ENCODE measurements at regions of chr14 and their contacts with region 1.

Region 1: GRCh38 chr14:33792720-33793368 is 158.0 kb downstream of the EGLN3 start:
- DNase-seq: peak; percentile 81
- ATAC-seq: peak; percentile 80
- H3K4me3 Mint-ChIP-seq: no peak overlapping the region
- H3K27ac Mint-ChIP-seq: no peak overlapping the region
- H3K4me1 Mint-ChIP-seq: peaks cover 17% of the 10 kb centered on the region
- H3K27me3 Mint-ChIP-seq: peaks cover 14% of the 10 kb centered on the region

Region 2: DNA sequence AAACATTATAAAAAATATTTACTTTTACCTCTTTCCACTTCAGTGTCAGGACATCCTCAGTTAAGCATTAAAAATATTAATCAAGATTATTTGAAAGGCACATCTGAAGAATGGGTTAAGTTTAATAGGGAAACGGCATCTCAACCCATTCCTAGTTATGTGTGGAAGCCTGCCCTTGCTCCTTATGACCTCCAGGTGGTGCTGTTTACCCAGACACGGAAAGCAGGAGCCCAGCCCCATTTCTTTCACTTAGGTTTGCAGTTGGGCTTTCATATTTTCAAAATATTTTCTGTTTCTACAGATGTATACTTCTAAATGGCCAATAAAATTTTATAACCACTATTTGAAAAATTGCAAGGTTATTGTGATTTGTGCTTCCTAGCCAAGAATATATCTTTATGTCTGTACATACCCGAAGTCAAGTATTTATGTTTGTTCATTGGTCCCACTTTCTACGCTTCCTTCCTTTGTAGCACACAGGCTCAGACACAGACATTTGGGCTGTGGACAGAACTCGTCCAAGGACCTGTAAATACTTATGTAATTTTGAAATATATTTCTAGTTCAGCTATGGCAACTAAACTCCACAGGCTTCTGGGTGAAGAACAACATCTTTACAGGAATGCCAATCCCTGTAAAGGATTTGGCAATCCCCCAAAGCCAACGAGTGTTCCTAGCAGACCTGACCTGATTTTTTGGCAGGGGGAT is 1216.6 kb before region 1 on chr14:
- CTCF ChIA-PET with region 1: interaction called, 14 read pairs
- POLR2A ChIA-PET with region 1: no interaction called
- DNase-seq: peak; percentile 55
- ATAC-seq: peak; percentile 74
- H3K4me3 Mint-ChIP-seq: no peak overlapping the region
- H3K27ac Mint-ChIP-seq: no peak overlapping the region
- H3K4me1 Mint-ChIP-seq: no peaks in the 10 kb centered on the region
- H3K27me3 Mint-ChIP-seq: peaks cover 12% of the 10 kb centered on the region

Region 3: GRCh38 chr14:32588448-32589320 is 1204.2 kb before region 1 on chr14:
- CTCF ChIA-PET with region 1: interaction called, 15 read pairs
- POLR2A ChIA-PET with region 1: no interaction called
- DNase-seq: peak; percentile 22
- ATAC-seq: no peak
- H3K4me3 Mint-ChIP-seq: no peak overlapping the region
- H3K27ac Mint-ChIP-seq: no peak overlapping the region
- H3K4me1 Mint-ChIP-seq: no peaks in the 10 kb centered on the region
- H3K27me3 Mint-ChIP-seq: peaks cover 1% of the 10 kb centered on the region

Region 4: GRCh38 chr14:33475623-33476022 is 317.2 kb before region 1 on chr14:
- CTCF ChIA-PET with region 1: interaction called, 11 read pairs
- POLR2A ChIA-PET with region 1: no interaction called
- DNase-seq: peak; percentile 22
- ATAC-seq: no peak
- H3K4me3 Mint-ChIP-seq: no peak overlapping the region
- H3K27ac Mint-ChIP-seq: no peak overlapping the region
- H3K4me1 Mint-ChIP-seq: no peaks in the 10 kb centered on the region
- H3K27me3 Mint-ChIP-seq: peaks cover 4% of the 10 kb centered on the region

Region 5: GRCh38 chr14:33805593-33805992 is 12.7 kb after region 1 on chr14:
- CTCF ChIA-PET with region 1: interaction called, 24 read pairs
- POLR2A ChIA-PET with region 1: no interaction called
- DNase-seq: no peak
- ATAC-seq: no peak
- H3K4me3 Mint-ChIP-seq: no peak overlapping the region
- H3K27ac Mint-ChIP-seq: no peak overlapping the region
- H3K4me1 Mint-ChIP-seq: no peaks in the 10 kb centered on the region
- H3K27me3 Mint-ChIP-seq: peaks cover 21% of the 10 kb centered on the region

Region 6: DNA sequence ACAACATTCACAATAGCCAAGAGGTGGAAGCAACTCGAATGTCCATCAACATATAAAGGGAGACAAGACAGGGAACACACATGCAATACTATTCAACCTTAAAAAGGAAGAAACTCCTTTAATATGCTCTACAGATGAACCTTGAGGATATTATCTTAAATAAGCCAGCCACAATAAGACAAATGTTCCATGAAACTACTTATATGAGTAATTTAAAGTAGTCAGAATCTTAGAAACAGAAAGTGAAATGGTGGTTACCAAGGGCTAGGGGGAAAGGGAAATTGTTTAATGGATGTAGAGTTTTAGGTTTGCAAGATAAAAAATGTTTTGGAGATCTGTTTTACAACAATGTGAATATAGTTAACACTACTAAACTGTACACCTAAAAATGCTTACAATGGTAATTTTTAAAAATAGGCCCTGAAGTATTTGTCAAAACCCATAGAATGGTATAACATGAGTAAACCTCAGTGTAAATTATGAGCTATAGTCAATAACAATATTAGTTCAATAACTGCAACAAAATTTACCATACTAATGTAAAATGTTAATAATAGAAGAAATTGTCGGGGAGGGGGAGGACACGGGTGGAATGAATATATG is 86.9 kb after region 1 on chr14:
- CTCF ChIA-PET with region 1: no interaction called
- POLR2A ChIA-PET with region 1: no interaction called
- DNase-seq: no peak
- ATAC-seq: no peak
- H3K4me3 Mint-ChIP-seq: no peak overlapping the region
- H3K27ac Mint-ChIP-seq: no peak overlapping the region
- H3K4me1 Mint-ChIP-seq: no peaks in the 10 kb centered on the region
- H3K27me3 Mint-ChIP-seq: no peaks in the 10 kb centered on the region

Region 7: DNA sequence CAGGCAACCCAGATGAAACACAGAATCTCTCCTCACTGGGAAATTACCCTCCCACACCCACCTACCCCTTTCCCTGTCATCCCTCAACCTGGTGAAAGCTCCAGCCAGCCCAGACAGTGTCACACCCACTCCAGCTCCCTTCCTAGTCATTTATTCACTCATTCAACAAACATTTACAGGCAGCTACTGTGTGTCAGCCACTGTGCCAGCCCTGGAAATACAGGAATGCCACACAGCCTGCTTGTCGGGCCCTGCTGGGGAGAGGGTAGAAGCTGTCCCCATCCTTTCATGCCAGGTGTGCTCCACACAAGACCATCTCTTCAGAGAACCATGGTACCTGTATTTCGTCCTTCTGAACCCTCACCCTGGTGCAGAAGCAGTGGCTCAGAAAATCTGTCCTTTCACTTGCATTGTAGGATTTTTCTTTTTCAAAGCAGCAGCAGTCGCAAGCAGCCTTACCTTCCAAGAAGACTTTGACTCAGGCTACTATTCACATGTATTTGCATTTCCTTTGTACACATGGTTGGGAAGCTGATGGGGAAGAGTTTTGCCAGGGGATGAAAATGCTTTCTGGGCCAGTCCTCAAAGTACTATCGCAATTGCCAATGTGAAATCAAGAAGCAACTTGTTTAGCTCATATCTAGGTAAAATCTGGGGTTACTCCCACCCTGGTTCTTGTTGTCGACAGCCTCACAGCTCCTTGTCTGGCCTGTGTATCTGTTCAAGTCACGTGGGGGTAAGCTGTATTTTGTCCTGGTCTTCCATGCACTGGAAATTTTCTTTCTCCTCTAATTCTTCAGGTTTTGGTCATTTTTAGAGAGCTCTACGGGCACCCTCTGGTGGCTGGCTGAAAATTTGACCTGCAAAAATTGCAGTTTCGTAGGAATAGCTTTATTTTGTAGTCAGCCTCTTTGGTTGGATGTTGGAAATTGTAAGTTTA is 305.5 kb after region 1 on chr14:
- CTCF ChIA-PET with region 1: interaction called, 10 read pairs
- POLR2A ChIA-PET with region 1: no interaction called
- DNase-seq: peak; percentile 51
- ATAC-seq: no peak
- H3K4me3 Mint-ChIP-seq: no peak overlapping the region
- H3K27ac Mint-ChIP-seq: peak overlapping the region; percentile 48
- H3K4me1 Mint-ChIP-seq: peaks cover 30% of the 10 kb centered on the region
- H3K27me3 Mint-ChIP-seq: peaks cover 4% of the 10 kb centered on the region

Region 8: DNA sequence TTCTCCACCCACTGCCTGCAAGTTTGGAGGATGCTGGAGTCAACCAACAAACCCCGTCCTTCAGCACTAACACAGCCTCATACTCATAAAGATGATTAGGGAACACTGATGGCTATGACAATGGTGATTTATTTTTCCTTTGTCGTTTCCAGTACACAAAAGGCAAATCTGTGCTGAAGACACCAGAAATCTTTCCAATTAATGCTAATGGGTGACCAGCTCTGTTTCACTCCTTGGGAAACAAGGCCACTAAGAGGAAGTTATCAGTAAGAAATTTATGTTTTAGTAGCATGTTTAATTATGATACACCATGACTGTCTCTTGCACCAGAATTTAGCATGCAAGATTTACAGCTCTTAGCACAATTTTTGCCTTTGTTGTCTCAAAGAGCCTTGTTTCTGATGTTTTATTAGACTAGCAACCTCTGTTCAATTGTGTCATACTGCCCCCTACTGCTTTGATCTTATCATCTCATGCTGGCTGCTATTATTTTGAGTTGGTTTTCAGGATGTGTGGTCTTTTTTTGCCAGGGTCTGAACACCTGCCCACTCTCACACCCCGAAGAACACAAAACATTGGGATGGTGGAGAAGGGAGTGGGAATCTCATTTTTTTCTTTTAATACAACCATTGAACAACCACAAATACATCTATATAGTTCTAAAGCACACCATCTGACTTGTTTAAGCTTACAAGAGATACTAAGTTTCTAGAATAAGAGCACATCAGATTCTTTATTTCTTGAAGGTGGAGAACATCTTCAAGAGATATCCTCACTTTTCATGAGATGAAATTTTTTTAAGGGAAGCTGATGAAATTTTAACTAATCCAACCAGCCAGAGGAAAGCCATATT is 508.3 kb after region 1 on chr14:
- CTCF ChIA-PET with region 1: interaction called, 10 read pairs
- POLR2A ChIA-PET with region 1: no interaction called
- DNase-seq: peak; percentile 28
- ATAC-seq: no peak
- H3K4me3 Mint-ChIP-seq: no peak overlapping the region
- H3K27ac Mint-ChIP-seq: no peak overlapping the region
- H3K4me1 Mint-ChIP-seq: no peaks in the 10 kb centered on the region
- H3K27me3 Mint-ChIP-seq: no peaks in the 10 kb centered on the region